Activated naive CD4-positive, alpha-beta T cell treated with anti-CD3 and anti-CD28 coated beads for 36 hours (primary cell): ENCODE measurements at regions of chr4 and their contacts with region 1.

Region 1: DNA sequence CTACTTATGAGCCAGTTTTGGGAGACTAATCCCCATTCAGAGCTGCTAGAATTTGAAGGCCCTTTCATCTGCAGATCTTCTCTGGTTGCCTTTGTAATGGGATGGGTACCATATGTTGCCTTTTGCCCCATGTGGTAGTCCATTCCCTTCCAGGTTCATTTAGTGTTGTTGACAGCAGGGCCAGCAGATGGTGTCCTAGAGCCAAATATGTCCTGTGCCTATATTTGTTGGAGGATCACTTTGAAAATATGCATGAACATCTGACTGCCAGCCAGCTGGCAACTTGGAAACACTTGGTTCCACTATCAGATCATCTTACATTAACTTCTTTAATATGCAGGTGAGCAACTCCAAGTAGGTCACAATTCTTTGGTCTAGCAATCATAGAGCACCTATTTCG is 30.4 kb downstream of the CFAP299 start:
- DNase-seq: peak; percentile 77
- H3K4me3 Mint-ChIP-seq: no peak overlapping the region
- H3K27ac Mint-ChIP-seq: no peak overlapping the region
- H3K4me1 Mint-ChIP-seq: peaks cover 6% of the 10 kb centered on the region
- H3K27me3 Mint-ChIP-seq: no peaks in the 10 kb centered on the region

Region 2: GRCh38 chr4:80619070-80619674 is 253.2 kb after region 1 on chr4:
- CTCF ChIA-PET with region 1: no interaction called
- intact Hi-C with region 1: loop called (anchors 5 kb)
- DNase-seq: peak; percentile 9
- H3K4me3 Mint-ChIP-seq: no peak overlapping the region
- H3K27ac Mint-ChIP-seq: no peak overlapping the region
- H3K4me1 Mint-ChIP-seq: no peaks in the 10 kb centered on the region
- H3K27me3 Mint-ChIP-seq: no peaks in the 10 kb centered on the region

Region 3: GRCh38 chr4:80788798-80789197 is 422.9 kb after region 1 on chr4:
- CTCF ChIA-PET with region 1: interaction called, 3 read pairs
- intact Hi-C with region 1: loop called (anchors 10 kb)
- DNase-seq: no peak
- H3K4me3 Mint-ChIP-seq: no peak overlapping the region
- H3K27ac Mint-ChIP-seq: no peak overlapping the region
- H3K4me1 Mint-ChIP-seq: peaks cover 11% of the 10 kb centered on the region
- H3K27me3 Mint-ChIP-seq: no peaks in the 10 kb centered on the region

Region 4: GRCh38 chr4:80989921-80990544 is 624.1 kb after region 1 on chr4:
- CTCF ChIA-PET with region 1: interaction called, 19 read pairs
- intact Hi-C with region 1: loop called (anchors 1 kb)
- DNase-seq: peak; percentile 14
- H3K4me3 Mint-ChIP-seq: no peak overlapping the region
- H3K27ac Mint-ChIP-seq: no peak overlapping the region
- H3K4me1 Mint-ChIP-seq: peaks cover 2% of the 10 kb centered on the region
- H3K27me3 Mint-ChIP-seq: no peaks in the 10 kb centered on the region

Region 5: DNA sequence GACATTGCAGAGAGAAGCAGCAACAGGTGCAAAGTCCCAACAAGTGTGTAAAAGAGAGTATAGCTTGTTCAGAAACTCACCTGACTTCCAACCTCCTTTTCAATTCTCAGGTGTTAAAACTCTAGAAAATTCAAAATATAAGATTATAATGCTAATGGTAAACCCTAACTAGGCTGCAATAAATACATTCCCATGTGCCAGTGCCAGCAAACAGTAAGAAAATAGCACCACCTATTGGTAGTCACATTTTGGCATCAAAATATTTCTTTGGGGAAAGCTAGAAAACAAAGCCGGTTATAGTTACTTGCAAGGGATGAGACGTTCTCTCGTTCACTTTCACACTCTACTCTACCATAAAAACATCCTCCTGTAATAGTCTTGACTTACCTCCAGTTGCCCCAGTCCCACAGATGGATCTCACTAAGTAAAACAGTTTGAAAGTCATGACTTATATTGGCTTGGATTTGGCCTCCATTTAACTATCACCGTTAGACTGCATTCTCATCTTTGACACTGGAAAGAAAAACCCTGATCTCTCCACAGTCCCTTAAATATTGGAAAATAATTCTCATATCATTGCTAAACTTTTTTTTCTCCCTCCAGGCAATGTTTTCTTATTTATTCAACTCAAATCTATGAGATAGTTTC is 674.2 kb after region 1 on chr4:
- CTCF ChIA-PET with region 1: interaction called, 35 read pairs
- intact Hi-C with region 1: loop called (anchors 1 kb)
- DNase-seq: no peak
- H3K4me3 Mint-ChIP-seq: no peak overlapping the region
- H3K27ac Mint-ChIP-seq: no peak overlapping the region
- H3K4me1 Mint-ChIP-seq: no peaks in the 10 kb centered on the region
- H3K27me3 Mint-ChIP-seq: no peaks in the 10 kb centered on the region

Region 6: DNA sequence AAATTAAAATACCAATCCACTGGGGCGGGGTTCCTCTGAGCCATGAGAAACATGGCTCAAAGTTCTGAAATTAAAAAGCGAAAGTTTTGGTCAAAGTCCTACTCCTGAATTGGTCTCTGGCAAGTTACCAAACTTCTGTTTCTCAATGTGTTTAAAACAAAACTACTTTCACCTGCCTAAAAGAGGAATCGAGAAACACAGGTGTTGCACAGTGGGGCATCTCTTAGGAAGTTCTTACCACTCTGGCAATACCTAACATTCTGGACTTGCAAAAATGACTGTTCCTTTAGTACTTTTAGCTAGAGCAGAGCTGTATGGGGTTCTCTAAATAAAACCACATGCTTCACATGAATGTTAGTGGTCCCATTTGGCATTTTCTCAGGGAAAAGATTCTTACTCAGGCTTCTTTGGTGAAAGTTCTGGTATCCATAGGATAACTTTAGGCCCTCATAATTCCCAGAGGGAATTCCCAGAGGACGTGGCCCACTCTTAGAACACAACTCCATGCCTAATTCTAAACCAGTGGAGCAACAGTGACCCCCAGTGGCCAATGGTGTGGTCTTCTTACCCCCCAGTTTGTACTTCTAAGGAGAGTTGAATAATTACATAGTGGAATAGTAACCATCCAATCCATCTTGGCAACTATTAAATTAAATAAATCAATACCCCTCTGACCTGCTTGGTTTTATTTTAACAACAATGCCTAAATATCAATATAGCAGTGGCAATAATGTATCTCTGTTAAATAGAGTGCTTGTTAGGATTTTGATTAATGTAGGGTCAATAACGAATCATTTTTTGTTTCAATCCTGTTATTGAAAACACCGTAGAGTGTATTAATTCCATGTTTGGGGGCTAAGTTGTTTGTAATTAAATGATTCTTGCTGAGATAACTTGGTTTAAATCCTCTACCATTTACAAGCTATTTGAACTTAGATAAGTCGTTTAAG is 686.5 kb after region 1 on chr4:
- CTCF ChIA-PET with region 1: interaction called, 4 read pairs
- intact Hi-C with region 1: loop called (anchors 1 kb)
- DNase-seq: peak; percentile 64
- H3K4me3 Mint-ChIP-seq: no peak overlapping the region
- H3K27ac Mint-ChIP-seq: no peak overlapping the region
- H3K4me1 Mint-ChIP-seq: no peaks in the 10 kb centered on the region
- H3K27me3 Mint-ChIP-seq: no peaks in the 10 kb centered on the region

Region 7: GRCh38 chr4:81116566-81116965 is 750.6 kb after region 1 on chr4:
- CTCF ChIA-PET with region 1: no interaction called
- intact Hi-C with region 1: no loop called
- DNase-seq: no peak
- H3K4me3 Mint-ChIP-seq: no peak overlapping the region
- H3K27ac Mint-ChIP-seq: no peak overlapping the region
- H3K4me1 Mint-ChIP-seq: peaks cover 2% of the 10 kb centered on the region
- H3K27me3 Mint-ChIP-seq: no peaks in the 10 kb centered on the region

Region 8: GRCh38 chr4:81351654-81352445 is 985.9 kb after region 1 on chr4:
- CTCF ChIA-PET with region 1: no interaction called
- intact Hi-C with region 1: loop called (anchors 2 kb)
- DNase-seq: peak; percentile 82
- H3K4me3 Mint-ChIP-seq: no peak overlapping the region
- H3K27ac Mint-ChIP-seq: no peak overlapping the region
- H3K4me1 Mint-ChIP-seq: no peaks in the 10 kb centered on the region
- H3K27me3 Mint-ChIP-seq: peaks cover 16% of the 10 kb centered on the region